ENCODE measurements at regions of chr17 and their contacts with region 1.

Region 1: GRCh38 chr17:43846221-43846712 is 709 bp upstream of the CD300LG start:
- DNase-seq: peak; percentile 3
- H3K4me3 ChIP-seq: no peak overlapping the region
- CTCF ChIP-seq: peak; percentile 100

Region 2: DNA sequence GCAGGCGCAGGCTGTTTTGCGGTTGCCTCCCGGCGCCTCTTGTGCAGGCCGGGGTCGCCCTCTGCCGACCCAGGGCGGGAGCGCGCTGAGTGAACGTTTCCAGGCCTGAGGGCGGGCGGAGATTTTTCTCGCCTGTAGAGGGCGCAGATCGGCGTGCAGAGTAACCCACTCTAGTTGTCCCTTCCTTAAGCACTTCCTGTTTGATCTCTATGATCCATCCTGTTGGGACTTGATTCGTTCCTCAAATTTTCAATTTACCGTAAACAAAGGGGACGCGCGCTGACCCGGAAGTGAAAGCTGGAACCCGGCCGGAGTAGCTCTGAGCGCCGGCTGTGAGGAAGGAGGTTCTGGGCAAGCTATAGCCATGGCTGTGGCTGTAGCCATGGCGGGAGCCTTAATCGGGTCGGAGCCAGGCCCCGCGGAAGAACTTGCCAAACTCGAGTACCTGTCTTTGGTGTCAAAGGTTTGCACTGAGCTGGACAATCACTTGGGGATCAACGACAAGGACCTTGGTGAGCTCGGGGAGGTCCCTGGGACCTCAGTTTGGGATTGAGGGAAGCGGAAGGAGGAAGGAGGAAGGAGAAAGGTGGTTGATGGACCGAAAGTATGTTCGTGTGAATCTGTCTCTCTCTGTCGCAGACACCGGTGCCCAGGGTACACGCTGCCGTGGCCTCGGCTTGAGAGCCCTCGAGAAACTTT is 362.4 kb before region 1 on chr17 and contains the start of gene DHX8:
- CTCF ChIA-PET with region 1: no interaction called
- POLR2A ChIA-PET with region 1: no interaction called
- DNase-seq: peak; percentile 98
- H3K4me3 ChIP-seq: peak within 1 kb of the TSS; percentile 96
- CTCF ChIP-seq: peak; percentile 100

Region 3: DNA sequence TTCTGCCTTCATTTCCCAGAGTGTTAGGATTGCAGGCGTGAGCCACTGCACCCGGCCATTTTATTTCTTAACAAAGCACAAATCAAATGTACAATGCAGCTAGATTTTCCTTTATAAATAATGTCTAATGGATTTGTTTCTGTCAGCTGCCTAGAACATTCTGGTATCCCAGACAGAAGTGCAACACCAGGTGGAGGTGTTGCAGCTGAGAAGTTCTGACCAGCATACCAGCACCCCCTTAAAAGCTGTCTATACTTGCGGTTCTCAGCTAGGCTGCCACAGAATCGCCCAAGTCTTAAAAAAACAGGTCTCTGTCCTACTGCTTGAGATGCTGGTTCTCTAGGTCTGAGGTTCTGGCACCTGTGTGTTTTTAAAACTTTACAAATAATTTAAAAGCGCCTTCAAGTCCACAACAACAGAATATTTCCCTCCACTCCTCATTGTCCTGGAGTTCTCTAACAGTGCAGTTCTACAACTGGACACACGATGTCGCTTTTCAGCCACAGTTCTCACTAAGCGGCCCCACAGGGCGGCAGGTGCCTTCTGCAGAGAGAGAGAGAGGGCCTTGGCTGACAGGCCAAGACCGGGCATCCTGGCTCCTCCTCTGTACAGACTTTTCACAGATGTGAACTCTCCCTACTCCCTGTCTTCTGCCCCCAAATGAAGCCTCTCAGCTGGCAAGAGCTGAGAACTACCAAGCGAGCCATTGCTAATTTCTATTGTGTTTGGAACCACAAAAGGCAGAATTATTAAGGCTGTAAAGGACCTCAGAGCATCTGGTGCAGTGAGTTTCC is 152.0 kb before region 1 on chr17:
- CTCF ChIA-PET with region 1: interaction called, 12 read pairs
- POLR2A ChIA-PET with region 1: no interaction called
- DNase-seq: no peak
- H3K4me3 ChIP-seq: no peak overlapping the region
- CTCF ChIP-seq: peak; percentile 78

Region 4: DNA sequence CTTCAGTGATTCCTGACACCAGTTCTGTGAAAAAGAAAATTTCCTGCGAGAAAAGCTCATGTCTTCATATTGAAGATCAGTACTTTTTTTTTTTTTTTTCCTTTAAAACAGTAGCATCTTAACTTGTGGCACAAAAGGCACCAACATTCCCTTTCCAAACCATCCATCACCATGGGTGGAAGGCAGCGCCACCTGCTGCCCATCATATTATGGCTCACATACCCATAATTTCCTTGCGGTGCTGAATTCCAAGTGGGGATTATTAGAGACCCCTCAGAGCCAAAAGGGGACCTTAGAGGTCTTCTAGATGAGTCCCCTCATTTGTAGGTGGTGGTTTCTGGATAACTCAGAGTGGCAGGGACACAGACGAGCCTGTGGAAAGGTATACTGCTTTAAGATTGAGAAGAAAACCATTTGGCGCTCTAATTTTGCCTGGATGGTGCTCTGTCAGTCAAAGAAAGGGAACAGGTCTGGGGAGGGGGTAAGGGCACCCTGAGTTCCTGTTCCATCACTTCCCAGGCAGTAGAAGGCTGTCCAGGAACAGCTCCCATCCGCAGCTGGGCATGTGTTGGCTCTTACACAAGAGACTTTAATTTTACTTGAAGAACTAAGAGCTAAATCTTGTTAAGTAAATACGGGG is 79.7 kb before region 1 on chr17:
- CTCF ChIA-PET with region 1: interaction called, 35 read pairs
- POLR2A ChIA-PET with region 1: no interaction called
- DNase-seq: no peak
- H3K4me3 ChIP-seq: no peak overlapping the region
- CTCF ChIP-seq: peak; percentile 78

Region 5: DNA sequence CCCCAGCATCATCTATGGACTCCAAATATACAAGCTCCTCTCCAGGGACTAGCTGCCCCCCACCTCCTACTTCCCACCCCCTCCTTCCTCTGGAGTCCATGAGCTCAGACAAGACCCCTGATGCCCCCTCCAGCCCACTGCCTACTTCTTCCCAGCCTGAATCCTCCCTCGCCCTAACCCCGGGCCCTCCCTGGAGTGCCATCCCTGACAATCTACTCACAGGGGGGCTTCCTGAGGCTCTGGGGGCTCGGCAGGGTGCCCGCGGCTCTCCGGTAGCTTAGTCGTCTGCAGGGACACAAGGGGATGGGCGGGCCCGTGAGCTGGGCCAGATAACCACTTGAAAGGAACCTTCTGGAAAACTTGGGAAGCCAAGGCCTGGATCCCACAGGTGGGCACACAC is 28.4 kb before region 1 on chr17:
- CTCF ChIA-PET with region 1: interaction called, 18 read pairs
- POLR2A ChIA-PET with region 1: no interaction called
- DNase-seq: no peak
- H3K4me3 ChIP-seq: no peak overlapping the region
- CTCF ChIP-seq: no peak

Region 6: GRCh38 chr17:43832976-43833829 is 13.1 kb before region 1 on chr17 and contains the start of gene MPP3:
- CTCF ChIA-PET with region 1: interaction called, 22 read pairs
- POLR2A ChIA-PET with region 1: no interaction called
- DNase-seq: no peak
- H3K4me3 ChIP-seq: peak within 1 kb of the TSS; percentile 71
- CTCF ChIP-seq: no peak

Region 7: DNA sequence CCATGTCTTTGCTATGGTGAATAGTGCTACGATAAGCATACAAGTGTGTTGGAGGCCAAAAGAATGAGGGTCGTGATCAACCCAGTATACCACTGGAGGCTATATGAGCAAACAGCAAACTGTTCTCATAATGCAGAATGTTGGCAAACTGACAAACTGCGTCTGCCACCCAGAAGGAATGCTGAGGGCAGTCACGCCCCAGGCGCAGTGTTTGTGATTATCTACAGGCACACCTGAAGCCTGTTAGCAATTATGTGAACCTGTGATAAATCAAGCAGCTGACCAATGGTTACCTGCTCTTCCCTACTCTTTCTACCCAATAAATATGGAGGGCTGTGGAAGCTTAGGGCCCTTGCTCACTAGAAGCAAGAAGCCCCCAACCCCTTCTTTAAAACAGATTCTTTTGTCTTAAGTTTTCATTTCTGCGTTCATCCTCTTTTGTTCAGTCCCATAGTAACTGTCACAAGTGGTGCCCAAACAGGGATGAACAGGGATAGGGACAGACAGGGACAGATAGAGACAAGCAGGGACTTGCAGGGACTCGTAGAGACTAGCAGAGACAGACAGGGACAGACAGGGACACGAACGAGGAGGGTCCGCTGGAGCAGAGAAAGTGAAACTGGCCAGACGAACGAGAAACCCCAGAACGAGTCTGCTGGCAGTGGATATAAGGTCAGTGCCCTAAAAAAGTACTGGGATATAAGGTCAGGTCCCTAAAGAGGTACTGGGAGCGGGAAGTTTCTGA is 25.9 kb after region 1 on chr17:
- CTCF ChIA-PET with region 1: interaction called, 37 read pairs
- POLR2A ChIA-PET with region 1: no interaction called
- DNase-seq: no peak
- H3K4me3 ChIP-seq: no peak overlapping the region
- CTCF ChIP-seq: no peak

Region 8: DNA sequence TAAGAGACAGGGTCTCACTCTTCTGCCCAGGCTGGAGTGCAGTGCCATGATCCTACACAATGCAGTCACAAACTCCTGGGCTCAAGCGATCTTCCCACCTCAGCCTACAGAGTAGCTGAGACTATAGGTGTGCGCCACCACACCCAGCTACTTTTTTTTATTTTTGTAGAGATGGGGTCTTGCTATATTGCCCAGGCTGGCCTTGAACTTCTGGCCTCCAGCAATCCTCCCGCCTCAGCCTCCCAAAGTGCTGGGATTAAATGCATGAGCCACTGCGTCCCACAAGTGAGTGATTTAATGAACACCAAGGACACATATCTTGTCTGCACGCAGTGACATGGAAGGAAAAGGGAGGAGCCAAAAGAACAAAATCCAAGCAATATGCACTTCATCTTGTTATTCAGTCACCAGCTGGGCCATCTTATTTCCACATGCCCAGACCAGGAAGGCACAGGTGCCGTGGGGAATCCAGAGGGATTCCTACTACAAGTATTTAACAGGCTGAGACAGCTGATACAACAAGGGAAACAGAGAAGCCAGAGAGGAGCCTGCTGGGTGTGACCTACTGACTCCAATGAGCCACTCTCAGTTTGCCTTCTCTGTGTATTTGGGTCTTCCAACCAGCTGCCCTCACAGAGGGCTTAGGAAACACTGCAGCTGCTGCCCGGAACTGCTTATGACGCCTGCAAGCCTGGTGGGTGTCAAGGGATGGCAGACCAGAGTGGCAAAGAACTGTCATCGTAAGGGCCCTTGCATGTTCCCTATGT is 203.2 kb after region 1 on chr17:
- CTCF ChIA-PET with region 1: no interaction called
- POLR2A ChIA-PET with region 1: no interaction called
- DNase-seq: no peak
- H3K4me3 ChIP-seq: no peak overlapping the region
- CTCF ChIP-seq: no peak

Region 9: DNA sequence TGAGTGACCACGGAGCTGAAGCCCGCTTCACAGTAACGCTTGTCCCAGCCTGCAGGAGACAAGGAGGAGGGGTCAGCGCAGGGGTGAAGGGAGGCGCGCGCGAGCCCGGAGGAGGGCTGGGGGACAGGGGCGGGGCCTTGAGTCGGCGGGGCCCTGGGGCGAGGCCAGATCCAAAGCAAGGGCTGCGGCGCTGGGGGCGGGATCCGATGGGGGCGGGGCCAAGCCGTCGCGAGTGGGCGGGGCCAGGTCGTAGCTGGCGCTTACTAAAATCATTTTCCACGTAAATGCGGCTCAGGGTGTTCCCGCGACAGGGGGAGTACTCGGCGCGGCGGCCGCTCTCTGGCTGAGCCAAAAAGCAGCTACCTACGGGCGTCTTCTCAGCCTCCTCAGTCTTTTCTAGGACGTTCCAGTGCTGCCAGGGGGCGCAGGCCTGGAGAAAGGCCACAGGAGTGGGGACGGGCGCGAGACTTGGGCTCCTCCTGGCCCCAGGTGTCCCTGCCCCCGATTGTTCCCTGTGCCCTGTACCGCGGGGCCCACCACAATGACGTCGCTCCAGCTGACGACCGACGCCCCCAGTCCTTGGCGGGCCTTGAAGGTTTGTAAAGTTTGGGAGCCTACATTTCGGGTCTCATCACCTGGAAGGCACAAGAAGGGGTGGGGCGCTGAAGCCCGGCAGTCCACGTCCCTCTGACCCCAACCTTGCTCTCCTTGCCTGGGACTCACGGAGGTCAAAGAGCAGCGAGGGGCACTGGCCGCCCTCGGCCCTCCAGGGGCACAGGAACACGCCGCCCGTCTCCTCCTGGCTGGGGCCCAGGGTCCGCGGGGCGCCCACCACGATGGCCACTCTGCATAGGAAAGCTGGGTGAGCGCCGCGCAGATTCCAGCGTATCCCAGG is 539.3 kb after region 1 on chr17:
- CTCF ChIA-PET with region 1: no interaction called
- POLR2A ChIA-PET with region 1: no interaction called
- DNase-seq: no peak
- H3K4me3 ChIP-seq: peak overlapping the region; percentile 62
- CTCF ChIP-seq: no peak

Measured in AG04449 (cell line).